ENCODE measurements at regions of chr12 and their contacts with region 1.

Region 1: GRCh38 chr12:117134059-117134458 is 34.8 kb upstream of the TESC start:
- DNase-seq: peak; percentile 24
- H3K4me3 ChIP-seq: no peak overlapping the region
- H3K27ac ChIP-seq: no peak overlapping the region
- H3K4me1 ChIP-seq: peaks cover 4% of the 10 kb centered on the region
- H3K27me3 ChIP-seq: no peaks in the 10 kb centered on the region
- CTCF ChIP-seq: no peak
- POLR2A ChIP-seq: no peak

Region 2: DNA sequence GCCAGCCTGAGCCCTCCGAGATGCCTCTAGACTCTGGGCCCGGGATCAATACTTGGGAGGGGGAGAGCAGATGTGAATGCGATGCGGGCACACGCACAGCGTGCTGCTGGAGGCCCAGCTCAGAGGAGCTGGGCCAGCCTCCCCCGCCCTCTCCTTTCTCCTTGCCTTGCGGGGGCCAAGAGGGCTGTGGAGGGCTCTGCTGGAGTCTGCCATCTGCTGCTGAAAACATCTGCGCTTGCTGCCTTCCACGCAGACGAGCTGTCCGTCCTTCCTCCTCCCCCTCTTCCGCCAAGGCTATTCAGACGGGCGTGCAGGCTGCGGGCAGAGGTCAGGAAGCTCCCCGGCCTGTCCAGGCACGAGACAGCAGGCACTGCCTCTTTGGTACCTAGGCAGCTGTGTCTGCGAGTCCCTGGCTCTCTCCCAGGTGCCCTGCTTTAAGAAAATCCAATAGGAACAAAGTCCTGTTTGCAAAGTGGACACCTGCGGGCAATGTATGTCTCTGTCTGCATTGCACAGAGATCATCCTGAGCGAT is 471.4 kb before region 1 on chr12:
- CTCF ChIA-PET with region 1: no interaction called
- POLR2A ChIA-PET with region 1: no interaction called
- dilution Hi-C with region 1: no loop called
- intact Hi-C with region 1: no loop called
- DNase-seq: no peak
- H3K4me3 ChIP-seq: no peak overlapping the region
- H3K27ac ChIP-seq: no peak overlapping the region
- H3K4me1 ChIP-seq: no peaks in the 10 kb centered on the region
- H3K27me3 ChIP-seq: peaks cover 9 to 11% of the 10 kb centered on the region in 2 experiments
- CTCF ChIP-seq: no peak
- POLR2A ChIP-seq: no peak

Region 3: DNA sequence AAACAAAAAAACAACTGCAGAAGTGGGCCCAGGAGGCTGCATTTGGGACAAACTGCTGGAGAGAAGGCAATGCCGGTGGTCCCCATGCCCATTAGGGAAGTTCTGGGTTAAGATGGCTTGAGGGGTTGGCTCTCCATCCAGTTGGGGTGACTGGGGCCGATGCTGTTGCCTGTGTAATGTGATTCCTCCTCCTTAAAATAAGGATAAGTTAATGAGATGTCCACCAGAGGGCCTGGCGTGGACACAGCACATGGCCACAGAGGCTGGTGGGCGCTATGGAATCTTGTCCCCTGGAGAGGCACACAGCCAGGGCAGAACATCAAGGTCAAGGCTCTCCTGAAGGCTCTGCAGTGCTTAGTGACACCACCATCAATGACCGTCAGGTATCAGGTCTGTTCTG is 33.8 kb before region 1 on chr12:
- CTCF ChIA-PET with region 1: interaction called, 7 read pairs
- POLR2A ChIA-PET with region 1: no interaction called
- dilution Hi-C with region 1: no loop called
- intact Hi-C with region 1: loop called (anchors 1 kb)
- DNase-seq: no peak
- H3K4me3 ChIP-seq: no peak overlapping the region
- H3K27ac ChIP-seq: no peak overlapping the region
- H3K4me1 ChIP-seq: no peaks in the 10 kb centered on the region
- H3K27me3 ChIP-seq: peaks cover 39 to 49% of the 10 kb centered on the region in 2 experiments
- CTCF ChIP-seq: peak in 1 of 2 donors; percentile 44
- POLR2A ChIP-seq: no peak

Region 4: DNA sequence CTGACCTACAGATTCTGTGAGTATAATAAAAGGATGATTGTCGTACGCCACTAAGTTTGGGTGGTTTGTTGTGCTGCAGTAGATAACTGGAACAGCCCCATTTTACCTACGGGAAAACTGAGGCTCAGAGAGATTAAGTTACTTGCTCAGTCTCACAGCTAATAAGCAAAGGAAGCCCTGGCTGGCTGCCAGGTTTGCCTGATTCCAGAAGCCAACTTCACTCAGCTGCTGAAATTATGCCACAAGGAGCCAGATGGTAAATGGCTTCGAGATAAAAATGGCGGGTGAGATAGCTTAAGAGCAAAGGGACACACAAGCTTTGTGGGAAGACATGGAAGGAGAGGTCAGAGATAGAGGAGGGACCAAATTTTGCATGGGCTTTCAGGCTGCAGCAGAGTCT is 418.9 kb after region 1 on chr12:
- CTCF ChIA-PET with region 1: no interaction called
- POLR2A ChIA-PET with region 1: no interaction called
- dilution Hi-C with region 1: no loop called
- intact Hi-C with region 1: no loop called
- DNase-seq: peak; percentile 8
- H3K4me3 ChIP-seq: no peak overlapping the region
- H3K27ac ChIP-seq: no peak overlapping the region
- H3K4me1 ChIP-seq: no peaks in the 10 kb centered on the region
- H3K27me3 ChIP-seq: no peaks in the 10 kb centered on the region
- CTCF ChIP-seq: no peak
- POLR2A ChIP-seq: no peak